AG04450 (cell line): ENCODE measurements at regions of chr2 and their contacts with region 1.

Region 1: DNA sequence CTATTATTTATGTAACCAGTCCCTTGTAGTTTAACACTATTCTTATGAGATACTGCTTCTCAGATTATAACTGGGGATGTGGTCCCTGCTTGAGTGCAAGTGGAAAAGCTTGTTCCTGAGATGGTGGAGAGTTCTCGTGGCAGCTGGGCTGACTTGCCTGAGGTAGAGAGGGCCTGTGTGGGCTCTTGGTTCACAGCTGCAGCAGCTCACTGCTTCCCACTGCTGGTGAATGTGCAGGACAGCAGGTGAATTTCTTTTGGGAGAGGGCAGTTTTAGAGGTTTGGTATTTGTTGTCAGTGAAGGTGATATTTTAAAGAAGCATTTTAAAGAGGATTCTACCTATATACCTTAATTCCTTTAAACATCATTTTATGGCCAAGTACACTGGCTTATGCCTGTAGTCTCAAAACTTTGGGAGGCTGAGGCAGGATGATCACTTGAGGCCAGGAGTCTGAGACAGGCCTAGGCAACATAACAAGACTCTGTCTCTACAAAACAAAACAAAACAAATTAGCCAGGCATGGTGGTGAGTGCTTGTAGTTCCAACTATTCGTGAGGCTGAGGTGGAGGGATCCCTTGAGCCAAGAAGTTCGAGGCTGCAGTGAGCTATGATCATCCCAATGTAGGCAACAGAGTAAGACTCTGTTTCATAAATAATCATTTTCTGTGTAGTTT is 94.8 kb downstream of the MTA3 start:
- DNase-seq: peak; percentile 65
- H3K4me3 ChIP-seq: no peak overlapping the region
- H3K27ac ChIP-seq: no peak overlapping the region
- H3K27me3 ChIP-seq: no peaks in the 10 kb centered on the region
- CTCF ChIP-seq: peak; percentile 100

Region 2: GRCh38 chr2:42494355-42495233 is 168.6 kb before region 1 on chr2:
- CTCF ChIA-PET with region 1: interaction called, 46 read pairs
- POLR2A ChIA-PET with region 1: no interaction called
- DNase-seq: peak; percentile 33
- H3K4me3 ChIP-seq: peak overlapping the region; percentile 54
- H3K27ac ChIP-seq: no peak overlapping the region
- H3K27me3 ChIP-seq: peaks cover 33% of the 10 kb centered on the region
- CTCF ChIP-seq: peak; percentile 88

Region 3: DNA sequence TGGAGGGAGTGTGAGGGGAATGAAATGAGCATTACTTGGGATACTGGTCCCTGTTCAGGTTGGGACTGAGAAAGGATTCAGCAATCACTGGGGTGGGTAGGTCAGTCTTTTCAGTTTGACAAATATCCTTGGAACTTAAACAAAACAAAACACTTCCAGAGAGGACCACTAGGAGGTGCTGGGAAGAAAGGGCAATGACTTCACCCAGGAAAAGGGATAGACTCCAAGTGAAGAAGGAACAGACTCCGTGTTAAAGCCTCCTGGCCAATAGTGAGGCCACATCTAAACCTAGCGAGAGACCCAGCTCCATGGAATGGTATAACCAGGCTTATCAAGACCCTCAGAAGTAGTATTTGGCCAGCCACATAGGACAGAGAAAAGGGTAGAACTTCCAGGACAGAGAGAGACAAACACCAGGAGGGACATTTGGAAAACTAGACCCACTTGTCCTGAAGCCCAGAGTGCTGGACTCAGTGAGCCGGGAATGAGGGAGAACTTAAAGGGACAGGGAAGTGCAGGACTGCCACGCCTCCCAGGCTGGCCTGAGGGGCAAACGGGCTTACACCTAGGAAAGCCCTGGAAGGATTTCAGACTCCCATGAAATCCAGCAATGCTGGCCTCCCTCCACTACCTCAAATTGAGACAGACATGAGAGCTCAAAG is 149.9 kb before region 1 on chr2:
- CTCF ChIA-PET with region 1: interaction called, 25 read pairs
- POLR2A ChIA-PET with region 1: interaction called, 3 read pairs
- DNase-seq: peak; percentile 20
- H3K4me3 ChIP-seq: no peak overlapping the region
- H3K27ac ChIP-seq: no peak overlapping the region
- H3K27me3 ChIP-seq: no peaks in the 10 kb centered on the region
- CTCF ChIP-seq: peak; percentile 76

Region 4: GRCh38 chr2:42639340-42640077 is 23.7 kb before region 1 on chr2:
- CTCF ChIA-PET with region 1: interaction called, 16 read pairs
- POLR2A ChIA-PET with region 1: no interaction called
- DNase-seq: no peak
- H3K4me3 ChIP-seq: no peak overlapping the region
- H3K27ac ChIP-seq: no peak overlapping the region
- H3K27me3 ChIP-seq: no peaks in the 10 kb centered on the region
- CTCF ChIP-seq: no peak

Region 5: GRCh38 chr2:42652086-42652485 is 11.2 kb before region 1 on chr2:
- CTCF ChIA-PET with region 1: interaction called, 40 read pairs
- POLR2A ChIA-PET with region 1: no interaction called
- DNase-seq: no peak
- H3K4me3 ChIP-seq: no peak overlapping the region
- H3K27ac ChIP-seq: no peak overlapping the region
- H3K27me3 ChIP-seq: no peaks in the 10 kb centered on the region
- CTCF ChIP-seq: no peak

Region 6: GRCh38 chr2:42673989-42674579 is 10.8 kb after region 1 on chr2:
- CTCF ChIA-PET with region 1: interaction called, 54 read pairs
- POLR2A ChIA-PET with region 1: no interaction called
- DNase-seq: no peak
- H3K4me3 ChIP-seq: no peak overlapping the region
- H3K27ac ChIP-seq: no peak overlapping the region
- H3K27me3 ChIP-seq: no peaks in the 10 kb centered on the region
- CTCF ChIP-seq: no peak

Region 7: GRCh38 chr2:42725657-42726056 is 62.4 kb after region 1 on chr2:
- CTCF ChIA-PET with region 1: interaction called, 10 read pairs
- POLR2A ChIA-PET with region 1: no interaction called
- DNase-seq: no peak
- H3K4me3 ChIP-seq: no peak overlapping the region
- H3K27ac ChIP-seq: no peak overlapping the region
- H3K27me3 ChIP-seq: no peaks in the 10 kb centered on the region
- CTCF ChIP-seq: no peak